ENCODE measurements at regions of chr11 and their contacts with region 1.

Region 1: GRCh38 chr11:118295834-118296454 is 8.6 kb upstream of the CD3E start:
- DNase-seq: peak; percentile 62
- ATAC-seq: peak; percentile 64
- H3K4me3 Mint-ChIP-seq: no peak overlapping the region
- H3K27ac Mint-ChIP-seq: no peak overlapping the region
- H3K4me1 Mint-ChIP-seq: peaks cover 22% of the 10 kb centered on the region
- H3K27me3 Mint-ChIP-seq: no peaks in the 10 kb centered on the region

Region 2: GRCh38 chr11:118171269-118172062 is 124.5 kb before region 1 on chr11:
- CTCF ChIA-PET with region 1: interaction called, 13 read pairs
- POLR2A ChIA-PET with region 1: no interaction called
- DNase-seq: peak; percentile 82
- ATAC-seq: peak; percentile 90
- H3K4me3 Mint-ChIP-seq: no peak overlapping the region
- H3K27ac Mint-ChIP-seq: no peak overlapping the region
- H3K4me1 Mint-ChIP-seq: peaks cover 10% of the 10 kb centered on the region
- H3K27me3 Mint-ChIP-seq: peaks cover 16% of the 10 kb centered on the region

Region 3: DNA sequence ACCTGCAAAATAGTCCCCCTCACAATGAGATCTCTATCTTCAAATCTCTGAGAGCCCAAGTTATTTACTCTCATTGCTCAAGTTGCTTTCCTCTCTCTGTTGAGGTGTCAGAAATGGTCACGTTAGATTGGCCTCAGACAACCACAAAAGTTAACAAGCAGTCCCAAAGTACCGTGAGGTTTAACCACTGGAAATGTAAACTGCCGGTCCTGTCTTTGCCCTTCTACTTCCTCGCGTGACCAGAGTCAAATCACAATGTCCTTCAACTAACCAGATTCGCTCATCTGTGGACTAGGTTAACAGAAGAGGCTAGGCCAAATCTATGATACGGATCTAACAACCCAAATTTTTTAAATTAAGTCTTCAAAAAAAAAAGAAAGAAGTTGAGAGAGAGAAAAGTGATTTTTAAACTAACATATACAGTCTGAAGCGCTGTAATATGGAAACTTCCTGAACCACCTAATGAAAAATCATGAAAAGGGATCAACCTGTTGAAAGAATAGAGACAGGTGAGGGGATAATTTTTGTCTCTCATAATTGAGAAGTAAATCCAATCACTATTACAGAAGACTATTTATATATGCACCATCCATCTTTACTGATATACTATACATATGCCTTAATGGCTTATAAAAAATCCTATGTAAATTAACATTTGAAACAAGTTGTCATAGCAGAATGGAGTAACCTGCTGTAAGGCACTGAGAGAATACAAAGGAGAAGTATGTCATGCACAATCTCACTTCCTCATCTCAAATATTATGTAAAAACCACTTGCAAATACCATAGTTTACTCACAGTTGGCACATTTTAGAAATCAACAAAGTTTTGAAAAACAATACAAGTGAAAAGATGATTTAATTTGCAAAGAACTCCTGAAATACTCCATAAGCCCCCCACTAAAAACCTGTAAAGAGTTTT is 67.8 kb before region 1 on chr11:
- CTCF ChIA-PET with region 1: interaction called, 11 read pairs
- POLR2A ChIA-PET with region 1: interaction called, 4 read pairs
- DNase-seq: peak; percentile 66
- ATAC-seq: peak; percentile 32
- H3K4me3 Mint-ChIP-seq: peak overlapping the region; percentile 65
- H3K27ac Mint-ChIP-seq: no peak overlapping the region
- H3K4me1 Mint-ChIP-seq: peaks cover 7% of the 10 kb centered on the region
- H3K27me3 Mint-ChIP-seq: no peaks in the 10 kb centered on the region

Region 4: GRCh38 chr11:118251858-118252652 is 43.9 kb before region 1 on chr11 and contains the start of gene MPZL3:
- CTCF ChIA-PET with region 1: interaction called, 19 read pairs
- POLR2A ChIA-PET with region 1: interaction called, 3 read pairs
- DNase-seq: peak; percentile 90
- ATAC-seq: peak; percentile 79
- H3K4me3 Mint-ChIP-seq: peak within 1 kb of the TSS; percentile 94
- H3K27ac Mint-ChIP-seq: peak within 1 kb of the TSS; percentile 99
- H3K4me1 Mint-ChIP-seq: peaks cover 42% of the 10 kb centered on the region
- H3K27me3 Mint-ChIP-seq: no peaks in the 10 kb centered on the region
- total RNA-seq, gene MPZL3: 19.6 to 20.0 TPM

Region 5: GRCh38 chr11:118263695-118264567 is 32.0 kb before region 1 on chr11 and contains the start of gene MPZL2:
- CTCF ChIA-PET with region 1: interaction called, 46 read pairs
- POLR2A ChIA-PET with region 1: interaction called, 3 read pairs
- DNase-seq: peak; percentile 55
- ATAC-seq: peak; percentile 73
- H3K4me3 Mint-ChIP-seq: peak within 1 kb of the TSS; percentile 77
- H3K27ac Mint-ChIP-seq: peak within 1 kb of the TSS; percentile 23
- H3K4me1 Mint-ChIP-seq: peaks cover 65% of the 10 kb centered on the region
- H3K27me3 Mint-ChIP-seq: peaks cover 3% of the 10 kb centered on the region
- total RNA-seq, gene MPZL2: 11.7 to 12.2 TPM

Region 6: DNA sequence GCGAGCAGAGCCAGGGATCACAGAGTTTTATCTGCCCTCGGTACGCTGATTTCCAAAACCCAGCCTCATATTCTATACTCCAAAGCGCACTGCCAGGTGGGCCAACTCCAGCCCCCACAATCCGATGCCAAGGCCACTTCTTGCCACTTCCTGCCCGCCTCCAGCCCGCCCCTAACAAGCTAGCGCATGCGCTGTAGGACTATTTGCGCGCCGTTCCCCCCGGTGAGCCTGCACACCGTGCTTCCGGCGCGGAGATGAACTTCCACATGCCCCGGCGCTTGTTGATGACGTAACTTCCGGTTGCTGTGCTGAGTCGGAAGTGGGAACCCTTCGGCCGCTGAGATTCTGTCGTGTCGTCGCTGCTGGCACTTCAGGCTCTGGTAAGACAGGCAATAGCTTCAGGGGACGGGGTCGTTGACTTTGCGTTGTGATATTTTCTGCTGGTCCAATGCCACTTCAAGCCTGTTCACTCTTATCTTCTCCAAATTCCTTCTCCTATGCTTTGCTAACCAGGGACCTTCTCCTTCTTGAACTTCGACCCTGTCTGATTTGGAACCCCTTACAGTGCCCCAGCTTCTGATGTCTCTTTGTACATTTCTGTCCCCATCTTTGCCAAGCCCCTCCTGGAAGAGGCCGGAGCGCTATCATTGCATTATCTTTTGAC is 63.5 kb after region 1 on chr11 and contains the start of gene UBE4A:
- CTCF ChIA-PET with region 1: interaction called, 12 read pairs
- POLR2A ChIA-PET with region 1: interaction called, 3 read pairs
- DNase-seq: peak; percentile 99
- ATAC-seq: peak; percentile 95
- H3K4me3 Mint-ChIP-seq: peak within 1 kb of the TSS; percentile 99
- H3K27ac Mint-ChIP-seq: peak within 1 kb of the TSS; percentile 97
- H3K4me1 Mint-ChIP-seq: peaks cover 52% of the 10 kb centered on the region
- H3K27me3 Mint-ChIP-seq: no peaks in the 10 kb centered on the region
- total RNA-seq, gene UBE4A: 38.5 to 39.8 TPM